Activated T-helper 2 cell treated with anti-CD3 and anti-CD28 coated beads, Interferon-gamma antibody, Interleukin-2, Interleukin-4, amounts not matched to agents 10 μg/mL and 5 μg/mL and 100 μg/mL, durations not matched to agents 14 hours and 24 hours and 36 hours (primary cell): ENCODE measurements at regions of chr2 and their contacts with region 1.

Region 1: DNA sequence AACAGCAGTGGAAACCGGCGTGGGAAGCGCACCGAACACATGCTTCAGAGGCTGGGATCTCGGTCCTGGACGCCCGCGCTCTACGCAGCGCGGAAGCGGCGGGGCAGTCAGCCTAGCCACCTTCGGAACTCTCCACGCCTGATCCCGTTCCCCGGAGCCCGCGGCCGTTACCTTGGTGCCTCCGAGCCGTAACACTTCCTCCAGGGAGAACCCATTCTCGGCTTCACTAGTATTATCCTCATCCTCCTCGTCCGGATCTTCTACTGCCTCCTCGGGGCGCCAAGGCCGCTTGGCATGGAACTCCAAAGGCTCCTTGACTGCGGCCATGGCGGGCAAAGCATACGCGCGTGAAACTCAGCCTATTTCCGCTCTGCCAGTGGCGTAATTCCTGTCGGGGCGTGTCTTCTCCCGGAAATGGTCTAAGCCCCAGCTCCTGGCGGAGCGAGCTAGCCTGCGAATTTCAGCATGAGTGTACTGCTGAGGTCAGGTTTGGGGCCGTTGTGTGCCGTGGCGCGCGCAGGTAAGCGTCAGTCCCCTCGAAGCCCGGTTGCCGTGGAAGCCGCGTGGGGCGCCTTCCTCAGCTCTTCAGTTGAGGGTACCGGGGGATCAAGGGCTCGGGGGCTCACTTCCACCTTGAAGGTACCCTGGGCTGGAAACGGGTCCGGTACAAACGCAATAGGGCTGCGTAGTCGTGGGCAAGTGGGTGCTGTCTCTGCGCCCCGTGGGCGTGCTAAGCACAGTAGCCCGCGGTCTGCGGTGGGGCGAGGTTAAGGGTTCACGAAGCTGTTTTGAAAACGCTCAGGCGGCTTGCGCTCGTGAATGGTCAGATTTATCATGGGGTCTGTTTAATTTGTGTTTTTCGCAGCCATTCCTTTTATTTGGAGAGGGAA is at the starts of genes CEBPZ and NDUFAF7:
- DNase-seq: peak; percentile 81
- H3K4me3 Mint-ChIP-seq: no peak within 1 kb of the TSS
- H3K27ac Mint-ChIP-seq: no peak within 1 kb of the TSS
- H3K4me1 Mint-ChIP-seq: peaks cover 24% of the 10 kb centered on the region
- H3K27me3 Mint-ChIP-seq: no peaks in the 10 kb centered on the region
- total RNA-seq, gene CEBPZ: 59.3 and 61.8 TPM in 2 replicates
- total RNA-seq, gene NDUFAF7: 19.8 and 21.2 TPM in 2 replicates

Region 2: DNA sequence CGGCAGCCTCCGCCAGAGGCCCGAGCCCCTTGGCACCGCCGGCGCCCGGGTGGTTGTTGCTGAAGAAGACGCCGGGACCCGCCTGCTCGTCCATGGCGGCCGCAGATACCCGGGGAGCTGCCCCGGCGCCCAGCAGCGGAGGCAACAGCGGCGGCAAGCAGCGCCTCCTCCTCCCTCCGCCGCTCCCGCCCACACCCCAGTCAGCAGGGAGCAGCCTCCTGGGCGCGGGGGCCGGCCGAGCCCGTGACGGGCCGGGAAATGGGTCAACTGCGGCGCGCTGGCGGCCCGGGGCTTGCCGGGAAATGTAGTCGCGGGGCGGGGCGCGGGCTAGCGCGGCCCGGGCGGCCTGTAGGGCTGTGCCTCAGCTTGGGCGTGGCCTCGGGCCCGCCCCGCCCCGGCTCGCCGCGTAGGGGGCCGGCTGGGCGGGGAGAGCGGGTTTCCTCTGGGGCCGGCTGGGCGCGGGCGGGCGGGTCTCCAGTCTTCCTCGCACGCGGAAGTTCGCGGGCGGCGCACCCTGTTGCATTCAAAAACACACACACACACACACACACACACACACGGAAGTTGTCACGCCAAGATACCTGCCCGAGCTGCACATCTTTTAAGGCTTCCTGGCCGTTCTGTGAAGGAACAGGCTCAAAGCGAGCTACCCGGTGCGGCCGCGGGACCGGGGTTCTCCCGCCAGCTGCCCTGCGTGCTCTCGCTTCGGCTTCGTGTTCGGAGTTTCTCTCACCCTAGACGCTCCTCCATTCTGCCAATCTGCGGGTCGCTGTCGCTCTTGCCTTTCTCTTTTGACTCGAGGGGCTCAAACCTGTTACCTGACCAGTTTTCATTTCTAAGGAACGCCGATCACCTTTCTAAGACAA is 264.9 kb before region 1 on chr2 and contains the start of gene STRN:
- intact Hi-C with region 1: loop called (anchors 1 kb)
- DNase-seq: peak; percentile 98
- H3K4me3 Mint-ChIP-seq: peak within 1 kb of the TSS; percentile 96
- H3K27ac Mint-ChIP-seq: peak within 1 kb of the TSS; percentile 96
- H3K4me1 Mint-ChIP-seq: peaks cover 33% of the 10 kb centered on the region
- H3K27me3 Mint-ChIP-seq: no peaks in the 10 kb centered on the region
- total RNA-seq, gene STRN: 27.7 and 29.7 TPM in 2 replicates

Region 3: DNA sequence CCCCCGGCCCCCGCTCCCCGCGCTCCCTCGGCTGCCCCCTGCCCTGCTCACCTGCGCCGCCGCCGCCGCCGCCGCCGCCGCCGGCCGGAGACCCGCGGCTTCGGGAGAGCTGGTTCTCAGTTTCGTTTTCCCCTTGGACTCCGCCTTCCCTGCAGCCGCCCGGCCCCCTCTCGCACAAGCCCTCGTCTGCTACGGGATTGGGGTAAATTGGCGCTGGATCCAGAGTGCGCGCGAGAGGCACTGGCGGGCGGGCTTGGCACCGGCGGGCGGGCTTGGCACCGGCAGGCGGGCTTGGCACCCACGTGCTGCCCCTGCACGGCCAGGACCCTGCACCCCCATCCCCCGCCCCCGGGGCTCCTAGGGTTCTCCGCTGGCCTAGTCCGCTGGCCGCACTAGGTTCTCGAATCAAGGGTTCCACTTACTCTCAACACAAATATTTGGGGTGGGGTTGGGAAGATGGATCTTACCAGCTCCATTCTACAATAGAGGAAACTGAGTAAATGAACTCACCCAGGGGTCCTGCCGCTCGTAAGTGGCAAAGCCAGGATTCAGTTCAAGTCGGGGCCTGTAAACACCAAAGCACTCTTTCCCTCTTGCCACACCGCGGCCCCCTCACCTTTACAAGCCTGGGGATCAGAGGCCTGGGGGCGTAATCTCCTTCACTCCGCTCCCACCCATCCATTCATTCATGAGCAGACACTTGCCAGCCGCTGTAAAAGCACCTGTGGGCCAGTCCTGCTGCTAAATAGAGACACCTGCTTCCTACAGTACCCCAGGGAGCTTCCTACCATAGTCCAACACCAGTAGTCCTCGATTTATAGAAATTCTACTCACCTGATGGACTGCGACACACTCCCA is 74.4 kb before region 1 on chr2 and contains the start of gene EIF2AK2:
- intact Hi-C with region 1: loop called (anchors 1 kb)
- DNase-seq: peak; percentile 83
- H3K4me3 Mint-ChIP-seq: peak within 1 kb of the TSS; percentile 94
- H3K27ac Mint-ChIP-seq: peak within 1 kb of the TSS; percentile 92
- H3K4me1 Mint-ChIP-seq: peaks cover 33% of the 10 kb centered on the region
- H3K27me3 Mint-ChIP-seq: no peaks in the 10 kb centered on the region
- total RNA-seq, gene EIF2AK2: 30.6 and 30.8 TPM in 2 replicates

Region 4: GRCh38 chr2:37201766-37202165 is 29.7 kb before region 1 on chr2:
- intact Hi-C with region 1: loop called (anchors 1 kb)
- DNase-seq: no peak
- H3K4me3 Mint-ChIP-seq: no peak overlapping the region
- H3K27ac Mint-ChIP-seq: peak overlapping the region; percentile 63
- H3K4me1 Mint-ChIP-seq: peaks cover 33% of the 10 kb centered on the region
- H3K27me3 Mint-ChIP-seq: no peaks in the 10 kb centered on the region

Region 5: DNA sequence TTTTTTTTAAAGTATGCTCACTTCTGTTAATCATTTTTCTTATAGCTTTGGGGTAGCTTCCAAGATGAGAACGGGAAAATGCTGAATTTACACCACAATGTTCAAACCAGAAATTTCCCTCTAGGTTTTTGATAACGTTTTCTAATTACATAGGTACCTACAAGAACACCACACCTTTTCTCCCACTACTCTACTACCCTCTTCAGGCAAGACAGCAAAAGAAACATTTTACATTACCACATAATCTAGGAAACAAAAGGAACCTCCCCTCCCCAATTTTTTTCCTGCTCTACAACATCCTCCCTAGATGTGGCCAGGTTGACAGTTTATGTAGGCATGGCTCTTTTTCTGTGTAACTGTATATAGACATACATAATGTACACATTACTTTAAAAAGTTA is 32.4 kb after region 1 on chr2:
- intact Hi-C with region 1: no loop called
- DNase-seq: no peak
- H3K4me3 Mint-ChIP-seq: no peak overlapping the region
- H3K27ac Mint-ChIP-seq: no peak overlapping the region
- H3K4me1 Mint-ChIP-seq: peaks cover 2% of the 10 kb centered on the region
- H3K27me3 Mint-ChIP-seq: no peaks in the 10 kb centered on the region

Region 6: GRCh38 chr2:37324786-37325624 is 93.5 kb after region 1 on chr2 and contains the start of gene PRKD3:
- intact Hi-C with region 1: loop called (anchors 2 kb)
- DNase-seq: peak; percentile 34
- H3K4me3 Mint-ChIP-seq: peak within 1 kb of the TSS; percentile 94
- H3K27ac Mint-ChIP-seq: peak within 1 kb of the TSS; percentile 90
- H3K4me1 Mint-ChIP-seq: peaks cover 33% of the 10 kb centered on the region
- H3K27me3 Mint-ChIP-seq: peaks cover 51% of the 10 kb centered on the region
- total RNA-seq, gene PRKD3: 11.9 and 14.0 TPM in 2 replicates